WTC11 (cell line): ENCODE measurements at regions of chr7 and their contacts with region 1.

Region 1: DNA sequence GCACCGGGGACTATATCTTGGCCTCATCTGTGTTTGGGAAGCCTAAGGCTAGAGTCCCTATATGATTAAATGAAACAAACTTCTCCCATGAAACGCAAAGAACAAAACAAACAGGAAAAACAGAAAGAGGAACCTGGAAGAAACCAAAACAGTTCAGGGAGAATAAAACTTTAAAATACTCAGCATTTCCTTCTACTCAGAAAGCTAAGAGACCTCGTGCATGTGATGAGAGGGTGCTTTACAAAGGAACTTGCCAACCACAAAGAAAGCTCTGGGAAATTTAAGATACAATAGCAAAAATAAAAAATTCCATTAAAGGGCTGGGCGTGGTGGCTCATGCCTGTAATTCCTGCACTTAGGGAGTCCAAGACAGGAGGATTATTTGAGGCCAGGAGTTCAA is 6.9 kb downstream of the PILRA start:
- DNase-seq: no peak
- ATAC-seq: no peak
- H3K4me3 Mint-ChIP-seq: no peak overlapping the region
- H3K27ac Mint-ChIP-seq: no peak overlapping the region
- H3K4me1 Mint-ChIP-seq: peaks cover 7% of the 10 kb centered on the region
- H3K27me3 Mint-ChIP-seq: peaks cover 9% of the 10 kb centered on the region
- CTCF ChIP-seq: no peak

Region 2: DNA sequence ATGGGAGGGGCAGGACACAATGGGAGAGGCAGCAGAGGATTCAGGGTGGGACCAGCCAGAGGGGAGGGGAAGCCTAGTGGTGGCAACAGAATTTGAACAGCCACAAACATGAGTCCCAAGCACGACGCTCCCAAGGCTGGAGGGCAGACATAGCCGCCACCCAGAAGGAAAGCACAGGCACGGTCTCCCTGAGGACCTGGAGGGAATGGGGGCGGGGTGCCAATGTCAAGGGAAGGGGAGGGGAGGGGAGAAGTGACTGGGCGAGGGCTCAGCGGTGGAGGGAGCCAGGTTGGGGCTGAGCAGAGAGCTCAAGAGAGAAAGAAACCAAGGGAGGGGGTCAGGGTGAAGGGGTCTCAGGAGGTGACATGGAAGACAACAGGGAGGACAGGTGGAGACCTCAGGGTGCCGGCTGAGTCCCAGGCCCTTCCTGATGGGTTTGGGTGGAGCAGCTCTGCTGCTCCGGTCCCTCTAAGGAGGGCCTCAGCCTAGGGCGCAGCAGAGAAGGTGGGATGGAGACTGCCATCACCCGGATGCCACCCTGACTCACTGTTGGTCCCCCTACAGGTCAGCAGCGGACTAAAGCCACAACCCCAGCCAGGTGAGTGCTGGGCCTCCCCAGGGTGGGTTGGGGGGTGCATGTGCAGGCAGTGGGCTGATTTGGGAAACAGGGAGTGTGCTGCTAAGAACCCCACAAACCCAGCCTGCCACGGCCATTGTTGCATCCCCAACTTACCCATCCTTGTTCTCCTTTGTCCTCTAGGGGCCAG is 17.3 kb after region 1 on chr7:
- CTCF ChIA-PET with region 1: interaction called, 10 read pairs
- POLR2A ChIA-PET with region 1: no interaction called
- DNase-seq: peak; percentile 18
- ATAC-seq: peak; percentile 71
- H3K4me3 Mint-ChIP-seq: no peak overlapping the region
- H3K27ac Mint-ChIP-seq: no peak overlapping the region
- H3K4me1 Mint-ChIP-seq: peaks cover 13% of the 10 kb centered on the region
- H3K27me3 Mint-ChIP-seq: peaks cover 24% of the 10 kb centered on the region
- CTCF ChIP-seq: no peak